ENCODE measurements at regions of chr11 and their contacts with region 1.

Region 1: DNA sequence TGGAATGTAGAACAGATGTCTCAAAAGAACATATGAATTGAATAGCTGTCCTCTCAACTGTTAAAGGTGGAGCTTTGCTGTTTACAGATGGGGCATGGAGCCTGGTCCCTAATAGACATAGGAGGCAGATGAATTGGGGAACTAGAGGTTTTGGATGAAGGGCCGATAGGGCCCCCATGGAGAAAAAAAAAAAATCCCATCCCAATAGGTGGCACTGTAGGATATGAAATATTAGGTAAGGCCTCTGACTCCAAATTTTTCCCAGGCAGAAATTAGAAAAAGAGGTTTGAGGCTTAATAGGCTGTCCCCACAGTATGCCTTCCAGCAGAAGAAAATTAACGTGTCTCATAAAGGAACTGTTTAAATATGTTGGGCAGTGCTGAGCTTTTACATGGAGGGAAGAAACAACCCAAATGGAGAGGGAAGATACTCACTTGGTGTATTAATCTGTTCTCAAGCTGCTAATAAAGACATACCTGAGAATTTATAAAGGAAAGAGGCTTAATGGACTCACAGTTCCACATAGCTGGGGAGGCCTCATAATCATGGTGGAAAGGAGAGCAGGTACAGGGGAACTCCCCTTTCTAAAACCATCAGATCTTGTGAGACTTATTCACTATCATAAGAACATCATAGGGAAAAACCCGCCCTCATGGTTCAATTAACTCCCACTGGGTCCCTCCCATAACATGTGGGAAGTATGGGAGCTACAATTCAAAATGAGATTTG is 30.1 kb upstream of the TMEM45B start:
- DNase-seq: no peak
- H3K4me3 Mint-ChIP-seq: no peak overlapping the region
- H3K27ac Mint-ChIP-seq: no peak overlapping the region
- H3K4me1 Mint-ChIP-seq: peaks cover 10% of the 10 kb centered on the region
- H3K27me3 Mint-ChIP-seq: no peaks in the 10 kb centered on the region
- CTCF ChIP-seq: no peak

Region 2: GRCh38 chr11:129386795-129387397 is 398.7 kb before region 1 on chr11:
- CTCF ChIA-PET with region 1: no interaction called
- intact Hi-C with region 1: no loop called
- DNase-seq: no peak
- H3K4me3 Mint-ChIP-seq: peak overlapping the region; percentile 67
- H3K27ac Mint-ChIP-seq: peak overlapping the region; percentile 90
- H3K4me1 Mint-ChIP-seq: peaks cover 85% of the 10 kb centered on the region
- H3K27me3 Mint-ChIP-seq: no peaks in the 10 kb centered on the region
- CTCF ChIP-seq: no peak

Region 3: DNA sequence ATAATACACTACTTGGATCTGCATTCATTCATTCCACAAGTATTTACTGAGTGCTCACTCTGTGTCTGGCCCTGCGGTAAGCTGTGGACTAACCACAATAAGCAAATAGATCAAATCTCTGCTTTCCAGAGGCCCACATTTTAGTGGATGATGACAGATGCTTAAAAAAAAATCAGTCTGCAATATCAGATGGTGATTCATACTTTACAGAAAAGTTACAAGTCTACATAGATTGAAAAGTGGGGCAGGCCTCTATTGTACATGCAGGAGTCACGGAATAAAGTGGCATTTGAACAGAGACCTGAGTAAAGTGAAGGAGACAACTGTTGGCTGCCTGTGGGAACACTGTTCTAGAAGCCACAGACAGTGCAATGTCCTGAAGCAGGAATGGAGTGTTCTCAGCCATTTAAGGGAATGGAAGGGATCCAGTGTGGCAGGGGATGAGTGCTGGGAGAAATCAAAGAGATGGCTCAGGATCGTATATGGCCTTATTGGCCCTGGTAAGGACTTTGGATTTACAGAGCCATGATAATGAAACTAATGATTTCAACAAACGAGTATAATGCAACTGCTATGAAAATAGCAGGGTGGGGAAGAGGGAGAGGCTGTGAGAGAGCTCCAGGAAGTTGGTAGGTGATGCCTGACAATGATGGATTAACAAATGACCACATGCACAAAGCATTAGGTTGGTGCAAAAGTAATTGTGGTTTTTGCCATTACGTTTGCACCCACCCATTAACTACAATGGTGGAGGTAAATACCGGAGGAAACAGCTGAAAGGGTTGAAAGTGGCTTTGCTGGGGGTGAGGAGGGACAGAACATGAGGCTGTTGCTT is 61.2 kb after region 1 on chr11:
- CTCF ChIA-PET with region 1: no interaction called
- intact Hi-C with region 1: loop called (anchors 5 kb)
- DNase-seq: peak; percentile 36
- H3K4me3 Mint-ChIP-seq: peak overlapping the region; percentile 41
- H3K27ac Mint-ChIP-seq: peak overlapping the region; percentile 96
- H3K4me1 Mint-ChIP-seq: peaks cover 39% of the 10 kb centered on the region
- H3K27me3 Mint-ChIP-seq: no peaks in the 10 kb centered on the region
- CTCF ChIP-seq: no peak

Region 4: DNA sequence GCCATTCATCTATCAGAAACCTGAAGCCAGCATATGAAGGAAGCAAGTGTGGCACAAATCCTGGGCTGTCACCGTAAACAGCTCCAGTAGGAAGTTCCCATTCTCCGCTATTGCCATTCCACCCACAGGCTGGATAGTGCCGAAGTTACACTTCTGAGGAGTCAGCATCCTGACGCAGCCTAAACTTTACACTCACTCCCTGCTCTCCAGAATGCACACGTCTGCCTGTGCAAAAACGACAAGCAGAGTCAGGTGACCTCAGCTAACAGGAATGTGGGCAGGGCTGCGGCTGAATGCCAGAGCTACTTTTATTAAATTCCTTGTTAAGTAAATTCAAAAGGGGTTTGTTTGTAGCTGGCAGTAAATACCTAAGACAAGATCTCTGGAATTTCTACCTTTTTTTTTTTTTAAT is 76.2 kb after region 1 on chr11:
- CTCF ChIA-PET with region 1: interaction called, 3 read pairs
- intact Hi-C with region 1: loop called (anchors 5 kb)
- DNase-seq: peak; percentile 82
- H3K4me3 Mint-ChIP-seq: peak overlapping the region; percentile 50
- H3K27ac Mint-ChIP-seq: peak overlapping the region; percentile 77
- H3K4me1 Mint-ChIP-seq: peaks cover 16% of the 10 kb centered on the region
- H3K27me3 Mint-ChIP-seq: no peaks in the 10 kb centered on the region
- CTCF ChIP-seq: no peak

Measured in Calu3 (cell line).